B cell (primary cell): ENCODE measurements at regions of chr22 and their contacts with region 1.

Region 1: GRCh38 chr22:37676736-37677492 is 1.5 kb downstream of the LGALS1 start:
- DNase-seq: peak; percentile 95
- ATAC-seq: peak; percentile 83
- H3K4me3 ChIP-seq: peak overlapping the region; percentile 73 to 92 (median 81)
- H3K4me3 Mint-ChIP-seq: peak overlapping the region; percentile 96
- H3K27ac ChIP-seq: peak overlapping the region; percentile 98
- H3K27ac Mint-ChIP-seq: peak overlapping the region; percentile 97
- H3K4me1 ChIP-seq: peaks cover 34 to 63% of the 10 kb centered on the region in 2 donors
- H3K4me1 Mint-ChIP-seq: peaks cover 56% of the 10 kb centered on the region
- H3K27me3 ChIP-seq: no peaks in the 10 kb centered on the region
- H3K27me3 Mint-ChIP-seq: no peaks in the 10 kb centered on the region
- CTCF ChIP-seq: no peak

Region 2: DNA sequence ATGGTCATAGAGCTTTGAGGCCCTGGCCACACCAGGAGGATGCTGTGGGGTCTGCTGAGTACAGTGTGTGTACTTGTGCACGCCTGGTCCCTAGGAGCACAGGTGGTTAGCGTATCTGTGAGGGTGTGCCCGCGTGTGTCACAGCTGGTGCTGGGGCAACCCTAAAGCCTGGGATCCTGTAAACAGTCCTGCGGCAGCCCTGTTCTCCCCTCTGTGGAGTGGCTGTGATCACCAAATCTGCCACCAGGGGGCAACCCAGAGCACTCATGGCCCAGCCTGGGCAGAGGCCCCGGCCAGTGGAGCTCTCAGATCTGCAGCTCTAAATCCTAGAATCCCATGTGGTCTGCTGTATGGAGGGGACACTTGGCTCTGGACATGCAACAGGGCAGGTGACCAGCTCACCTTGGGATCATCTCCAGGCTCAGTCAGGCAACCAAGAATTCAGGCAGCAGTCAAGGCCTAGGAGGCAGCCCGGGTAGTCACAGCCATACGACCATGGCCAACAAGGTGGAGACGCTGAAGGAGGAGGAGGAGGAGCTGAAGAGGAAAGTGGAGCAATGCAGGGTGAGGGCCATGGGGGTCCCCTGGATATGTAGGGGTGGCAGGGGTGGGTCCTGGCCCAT is 33.6 kb before region 1 on chr22:
- CTCF ChIA-PET with region 1: interaction called, 501 read pairs
- POLR2A ChIA-PET with region 1: interaction called, 14 read pairs
- intact Hi-C with region 1: loop called (anchors 1 kb)
- DNase-seq: peak; percentile 86
- ATAC-seq: peak; percentile 75
- H3K4me3 ChIP-seq: no peak overlapping the region
- H3K4me3 Mint-ChIP-seq: peak overlapping the region; percentile 56
- H3K27ac ChIP-seq: no peak overlapping the region
- H3K27ac Mint-ChIP-seq: peak overlapping the region; percentile 87
- H3K4me1 ChIP-seq: peaks cover 24 to 39% of the 10 kb centered on the region in 2 donors
- H3K4me1 Mint-ChIP-seq: peaks cover 35% of the 10 kb centered on the region
- H3K27me3 ChIP-seq: no peaks in the 10 kb centered on the region
- H3K27me3 Mint-ChIP-seq: no peaks in the 10 kb centered on the region
- CTCF ChIP-seq: peak; percentile 91

Region 3: GRCh38 chr22:37664249-37665101 is 12.4 kb before region 1 on chr22:
- CTCF ChIA-PET with region 1: interaction called, 462 read pairs
- POLR2A ChIA-PET with region 1: interaction called, 44 read pairs
- intact Hi-C with region 1: loop called (anchors 1 kb)
- DNase-seq: no peak
- ATAC-seq: no peak
- H3K4me3 ChIP-seq: no peak overlapping the region
- H3K4me3 Mint-ChIP-seq: no peak overlapping the region
- H3K27ac ChIP-seq: no peak overlapping the region
- H3K27ac Mint-ChIP-seq: no peak overlapping the region
- H3K4me1 ChIP-seq: peaks cover 29 to 35% of the 10 kb centered on the region in 2 donors
- H3K4me1 Mint-ChIP-seq: peaks cover 33% of the 10 kb centered on the region
- H3K27me3 ChIP-seq: no peaks in the 10 kb centered on the region
- H3K27me3 Mint-ChIP-seq: no peaks in the 10 kb centered on the region
- CTCF ChIP-seq: no peak